CD4-positive, alpha-beta T cell (primary cell): ENCODE measurements at regions of chr14 and their contacts with region 1.

Region 1: DNA sequence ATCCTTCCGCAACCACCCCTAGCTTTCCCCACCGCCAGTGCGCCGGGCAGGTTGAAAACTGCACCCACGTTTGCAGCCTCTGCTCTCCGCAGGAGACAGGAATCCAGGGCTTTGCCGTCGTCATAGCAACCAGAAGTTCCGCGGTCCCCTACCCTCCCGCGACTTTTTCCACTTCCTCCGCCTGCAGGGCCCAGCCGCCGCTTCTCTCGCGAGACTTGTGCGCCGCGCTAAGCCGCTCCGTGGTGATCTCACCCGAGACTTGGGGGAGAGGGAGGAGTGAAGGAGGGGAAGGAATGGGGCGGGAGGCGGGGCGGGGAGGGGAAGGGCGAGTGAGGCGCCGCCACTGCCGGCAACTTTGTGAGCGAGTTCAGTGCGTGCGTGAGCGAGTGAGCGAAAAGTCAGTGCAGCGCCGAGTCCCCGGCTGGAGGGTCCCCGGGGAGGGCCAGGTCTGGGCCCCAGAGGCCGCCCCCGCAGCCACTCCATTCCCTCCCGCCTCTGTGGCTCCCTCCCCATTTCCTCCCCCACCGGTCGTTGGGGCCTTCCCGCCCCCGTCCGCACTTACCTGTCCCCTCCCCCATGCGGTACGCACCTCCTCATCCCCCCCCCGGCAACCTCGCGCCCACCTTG is 413.0 kb downstream of the PCNX1 start:
- DNase-seq: peak; percentile 96 to 100 (median 98)
- ATAC-seq: peak; percentile 85
- H3K4me3 ChIP-seq: peak within 1 kb of the TSS; percentile 85
- H3K4me3 Mint-ChIP-seq: peak within 1 kb of the TSS; percentile 94
- H3K27ac ChIP-seq: peak within 1 kb of the TSS; percentile 85 to 97
- H3K27ac Mint-ChIP-seq: peak within 1 kb of the TSS; percentile 89
- H3K4me1 ChIP-seq: peaks cover 20% of the 10 kb centered on the region
- H3K4me1 Mint-ChIP-seq: peaks cover 47% of the 10 kb centered on the region
- H3K27me3 ChIP-seq: no peaks in the 10 kb centered on the region
- H3K27me3 Mint-ChIP-seq: no peaks in the 10 kb centered on the region
- CTCF ChIP-seq: no peak

Region 2: DNA sequence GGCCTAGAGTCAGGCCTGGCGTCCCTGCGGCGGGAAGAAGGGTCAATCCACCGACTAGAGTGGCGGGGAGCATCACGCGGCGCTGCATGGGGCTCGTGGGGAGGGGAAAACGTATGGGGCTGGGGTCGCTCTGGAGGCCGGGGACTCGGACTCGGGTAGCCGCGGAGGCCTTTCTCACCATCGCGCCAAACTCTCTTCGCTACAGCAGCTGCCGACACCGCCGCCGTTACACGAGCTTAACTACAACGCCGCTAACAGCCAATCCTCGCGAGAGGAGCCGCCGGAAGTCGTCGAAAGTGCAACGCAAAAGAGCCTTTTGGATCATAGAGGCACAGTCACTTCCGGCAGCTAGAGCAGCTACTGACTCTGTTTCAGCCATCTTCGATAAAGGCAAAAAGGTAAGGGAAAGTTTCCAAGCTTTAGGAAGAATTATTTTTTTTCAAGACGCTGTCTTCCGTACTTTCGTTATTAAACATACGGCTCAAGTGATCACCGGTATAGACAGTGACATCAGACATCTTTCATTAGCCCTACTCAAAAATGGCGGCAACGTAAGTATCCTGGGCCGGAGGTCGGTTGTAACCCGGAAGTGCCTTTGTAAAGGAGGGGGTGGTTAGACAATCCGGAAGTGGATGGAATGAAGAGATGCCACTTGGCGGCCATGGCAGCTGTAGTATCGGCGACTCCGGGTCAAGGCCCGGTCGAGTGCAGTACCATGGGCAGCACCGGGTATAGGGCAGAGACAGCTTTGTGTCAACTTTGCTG is 1922.0 kb before region 1 on chr14 and contains the starts of genes ERH and SLC39A9:
- CTCF ChIA-PET with region 1: no interaction called
- POLR2A ChIA-PET with region 1: no interaction called
- intact Hi-C with region 1: loop called in 1 of 2 experiments (anchors 5 kb)
- DNase-seq: peak; percentile 90 to 98 (median 93)
- ATAC-seq: peak; percentile 84
- H3K4me3 ChIP-seq: peak within 1 kb of the TSS; percentile 94
- H3K4me3 Mint-ChIP-seq: peak within 1 kb of the TSS; percentile 96
- H3K27ac ChIP-seq: peak within 1 kb of the TSS; percentile 82 to 92
- H3K27ac Mint-ChIP-seq: peak within 1 kb of the TSS; percentile 99
- H3K4me1 ChIP-seq: peaks cover 53% of the 10 kb centered on the region
- H3K4me1 Mint-ChIP-seq: peaks cover 85% of the 10 kb centered on the region
- H3K27me3 ChIP-seq: no peaks in the 10 kb centered on the region
- H3K27me3 Mint-ChIP-seq: no peaks in the 10 kb centered on the region
- CTCF ChIP-seq: no peak
- total RNA-seq, gene ERH: 87.0 to 96.3 TPM
- total RNA-seq, gene SLC39A9: 19.5 to 20.5 TPM

Region 3: GRCh38 chr14:70600382-70601157 is 719.6 kb before region 1 on chr14 and contains the start of gene MED6:
- CTCF ChIA-PET with region 1: no interaction called
- POLR2A ChIA-PET with region 1: no interaction called
- intact Hi-C with region 1: loop called in 1 of 2 experiments (anchors 5 kb)
- DNase-seq: peak; percentile 83 to 97 (median 91)
- ATAC-seq: peak; percentile 99
- H3K4me3 ChIP-seq: peak within 1 kb of the TSS; percentile 97
- H3K4me3 Mint-ChIP-seq: peak within 1 kb of the TSS; percentile 100
- H3K27ac ChIP-seq: peak within 1 kb of the TSS; percentile 79 to 92
- H3K27ac Mint-ChIP-seq: peak within 1 kb of the TSS; percentile 99
- H3K4me1 ChIP-seq: peaks cover 15% of the 10 kb centered on the region
- H3K4me1 Mint-ChIP-seq: peaks cover 37% of the 10 kb centered on the region
- H3K27me3 ChIP-seq: no peaks in the 10 kb centered on the region
- H3K27me3 Mint-ChIP-seq: peaks cover 5% of the 10 kb centered on the region
- CTCF ChIP-seq: no peak
- total RNA-seq, gene MED6: 90.2 to 97.2 TPM

Region 4: DNA sequence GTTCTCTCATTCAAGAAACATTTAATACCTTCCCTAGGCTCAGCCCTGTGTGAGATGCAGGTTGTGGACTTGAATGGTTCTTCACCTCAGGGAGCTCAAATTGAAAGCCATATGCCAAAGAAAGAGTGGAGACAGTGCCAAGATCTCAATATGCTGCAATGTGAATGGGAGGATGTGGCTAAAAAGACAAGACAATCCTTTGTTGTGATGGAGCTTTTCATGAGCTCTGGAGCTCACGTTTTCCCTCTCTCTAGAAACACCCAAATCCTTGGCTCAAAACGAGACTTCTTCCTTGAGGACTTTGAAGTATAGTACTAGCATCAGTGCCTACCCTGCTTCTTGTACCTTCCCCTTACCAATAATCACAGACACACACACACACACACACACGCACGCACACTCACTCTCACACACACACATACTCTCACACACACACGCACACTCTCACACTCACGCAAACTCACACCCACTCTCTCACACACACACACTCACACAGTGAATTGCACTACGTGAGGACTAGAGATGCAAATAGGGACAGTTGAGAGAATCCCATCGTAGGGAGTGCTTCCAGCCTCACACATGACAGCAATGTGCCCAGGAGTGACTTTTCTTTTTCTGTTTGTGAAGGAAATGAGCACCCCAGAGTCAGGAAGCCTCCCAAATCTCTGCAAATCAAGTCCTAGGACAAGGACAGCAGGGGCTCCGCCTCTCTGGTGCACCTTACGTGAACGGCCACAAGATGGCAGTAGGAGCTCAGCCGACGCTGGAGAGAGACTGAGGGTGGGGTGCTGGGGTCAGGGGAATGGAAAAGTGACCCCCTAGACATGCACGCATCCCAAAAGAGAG is 181.5 kb before region 1 on chr14:
- CTCF ChIA-PET with region 1: no interaction called
- POLR2A ChIA-PET with region 1: interaction called, 5 read pairs
- intact Hi-C with region 1: loop called (anchors 5 to 10 kb)
- DNase-seq: peak; percentile 35 to 79 (median 50)
- ATAC-seq: peak; percentile 52
- H3K4me3 ChIP-seq: no peak overlapping the region
- H3K4me3 Mint-ChIP-seq: no peak overlapping the region
- H3K27ac ChIP-seq: no peak overlapping the region
- H3K27ac Mint-ChIP-seq: no peak overlapping the region
- H3K4me1 ChIP-seq: peaks cover 23% of the 10 kb centered on the region
- H3K4me1 Mint-ChIP-seq: peaks cover 16% of the 10 kb centered on the region
- H3K27me3 ChIP-seq: no peaks in the 10 kb centered on the region
- H3K27me3 Mint-ChIP-seq: no peaks in the 10 kb centered on the region
- CTCF ChIP-seq: peak; percentile 95

Region 5: GRCh38 chr14:71346685-71347084 is 26.5 kb after region 1 on chr14:
- CTCF ChIA-PET with region 1: no interaction called
- POLR2A ChIA-PET with region 1: no interaction called
- intact Hi-C with region 1: no loop called
- DNase-seq: peak in 3 of 14 experiments; percentile 25 to 39 (median 30)
- ATAC-seq: peak; percentile 24
- H3K4me3 ChIP-seq: no peak overlapping the region
- H3K4me3 Mint-ChIP-seq: no peak overlapping the region
- H3K27ac ChIP-seq: no peak overlapping the region
- H3K27ac Mint-ChIP-seq: no peak overlapping the region
- H3K4me1 ChIP-seq: no peaks in the 10 kb centered on the region
- H3K4me1 Mint-ChIP-seq: peaks cover 36% of the 10 kb centered on the region
- H3K27me3 ChIP-seq: no peaks in the 10 kb centered on the region
- H3K27me3 Mint-ChIP-seq: no peaks in the 10 kb centered on the region
- CTCF ChIP-seq: no peak

Region 6: GRCh38 chr14:71388862-71389261 is 68.6 kb after region 1 on chr14:
- CTCF ChIA-PET with region 1: no interaction called
- POLR2A ChIA-PET with region 1: no interaction called
- intact Hi-C with region 1: no loop called
- DNase-seq: no peak
- ATAC-seq: no peak
- H3K4me3 ChIP-seq: no peak overlapping the region
- H3K4me3 Mint-ChIP-seq: no peak overlapping the region
- H3K27ac ChIP-seq: no peak overlapping the region
- H3K27ac Mint-ChIP-seq: no peak overlapping the region
- H3K4me1 ChIP-seq: no peaks in the 10 kb centered on the region
- H3K4me1 Mint-ChIP-seq: peaks cover 22% of the 10 kb centered on the region
- H3K27me3 ChIP-seq: no peaks in the 10 kb centered on the region
- H3K27me3 Mint-ChIP-seq: no peaks in the 10 kb centered on the region
- CTCF ChIP-seq: no peak

Region 7: GRCh38 chr14:71555654-71556559 is 235.7 kb after region 1 on chr14:
- CTCF ChIA-PET with region 1: no interaction called
- POLR2A ChIA-PET with region 1: interaction called, 11 read pairs
- intact Hi-C with region 1: loop called in 1 of 2 experiments (anchors 2 kb)
- DNase-seq: peak; percentile 2 to 87 (median 38)
- ATAC-seq: peak; percentile 87
- H3K4me3 ChIP-seq: peak overlapping the region; percentile 32
- H3K4me3 Mint-ChIP-seq: peak overlapping the region; percentile 78
- H3K27ac ChIP-seq: peak overlapping the region; percentile 77 to 79
- H3K27ac Mint-ChIP-seq: peak overlapping the region; percentile 87
- H3K4me1 ChIP-seq: peaks cover 16% of the 10 kb centered on the region
- H3K4me1 Mint-ChIP-seq: peaks cover 80% of the 10 kb centered on the region
- H3K27me3 ChIP-seq: no peaks in the 10 kb centered on the region
- H3K27me3 Mint-ChIP-seq: no peaks in the 10 kb centered on the region
- CTCF ChIP-seq: no peak

Region 8: DNA sequence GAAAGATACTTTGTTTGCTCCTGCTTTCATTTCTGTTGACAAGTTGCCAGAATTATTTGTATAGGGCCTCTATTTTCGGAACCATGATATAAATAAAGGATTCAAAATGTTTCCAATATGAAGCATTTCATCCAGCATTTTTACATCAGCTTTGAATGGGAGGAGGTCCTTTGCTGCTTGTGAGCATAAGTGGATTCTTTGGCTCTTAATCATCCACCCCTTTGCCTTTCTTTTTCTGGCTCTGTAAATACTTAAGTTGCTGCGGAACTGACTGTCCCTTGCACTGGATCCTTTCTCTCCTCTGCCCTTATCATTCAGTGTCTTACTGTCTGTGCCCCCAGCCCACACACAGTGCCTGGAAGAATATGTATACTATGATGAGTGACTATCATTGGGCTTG is 254.8 kb after region 1 on chr14:
- CTCF ChIA-PET with region 1: no interaction called
- POLR2A ChIA-PET with region 1: no interaction called
- intact Hi-C with region 1: no loop called
- DNase-seq: peak in 1 of 14 experiments; percentile 57
- ATAC-seq: no peak
- H3K4me3 ChIP-seq: no peak overlapping the region
- H3K4me3 Mint-ChIP-seq: no peak overlapping the region
- H3K27ac ChIP-seq: no peak overlapping the region
- H3K27ac Mint-ChIP-seq: no peak overlapping the region
- H3K4me1 ChIP-seq: no peaks in the 10 kb centered on the region
- H3K4me1 Mint-ChIP-seq: peaks cover 31% of the 10 kb centered on the region
- H3K27me3 ChIP-seq: no peaks in the 10 kb centered on the region
- H3K27me3 Mint-ChIP-seq: no peaks in the 10 kb centered on the region
- CTCF ChIP-seq: no peak

Region 9: DNA sequence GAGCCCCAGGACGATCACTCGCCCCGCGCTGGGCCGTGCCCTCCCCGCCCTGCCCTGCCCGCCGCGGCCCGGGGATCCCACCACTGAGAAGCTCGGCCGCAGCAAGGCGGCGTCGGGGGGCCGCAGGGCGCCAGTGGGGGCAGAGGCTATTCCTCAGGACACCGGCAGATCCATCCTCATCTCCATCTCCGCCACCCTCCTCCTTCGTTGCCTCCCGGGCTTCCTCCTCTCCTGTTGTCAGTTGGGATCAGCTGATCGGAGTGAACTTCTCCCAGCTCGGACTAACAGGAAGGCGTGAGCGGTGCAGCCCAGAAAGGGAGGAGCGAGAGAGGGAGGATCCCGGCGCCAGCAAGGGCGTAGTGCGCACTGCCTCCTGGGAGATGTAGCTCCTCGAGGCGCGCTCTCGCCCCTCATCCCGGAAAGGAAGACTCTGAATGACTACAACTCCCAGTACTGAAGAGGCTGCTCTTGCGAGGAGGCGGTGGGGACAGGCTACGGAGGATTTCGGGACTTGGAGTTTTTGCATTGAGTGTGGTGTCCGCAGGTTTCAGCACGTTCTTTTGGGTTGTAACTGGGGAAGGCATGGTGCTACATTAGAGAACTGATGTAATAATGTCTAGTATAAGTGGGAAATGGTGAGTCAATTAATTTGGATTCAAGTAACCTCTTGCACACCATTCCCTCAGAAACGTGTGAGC is 1706.8 kb after region 1 on chr14 and contains the start of gene ZFYVE1:
- CTCF ChIA-PET with region 1: no interaction called
- POLR2A ChIA-PET with region 1: no interaction called
- intact Hi-C with region 1: loop called in 1 of 2 experiments (anchors 10 kb)
- DNase-seq: peak; percentile 76 to 96 (median 86)
- ATAC-seq: peak; percentile 99
- H3K4me3 ChIP-seq: peak within 1 kb of the TSS; percentile 64
- H3K4me3 Mint-ChIP-seq: peak within 1 kb of the TSS; percentile 97
- H3K27ac ChIP-seq: no peak within 1 kb of the TSS
- H3K27ac Mint-ChIP-seq: peak within 1 kb of the TSS; percentile 79
- H3K4me1 ChIP-seq: peaks cover 18% of the 10 kb centered on the region
- H3K4me1 Mint-ChIP-seq: peaks cover 47% of the 10 kb centered on the region
- H3K27me3 ChIP-seq: no peaks in the 10 kb centered on the region
- H3K27me3 Mint-ChIP-seq: no peaks in the 10 kb centered on the region
- CTCF ChIP-seq: no peak
- total RNA-seq, gene ZFYVE1: 9.3 to 10.9 TPM